ENCODE measurements at regions of chr16 and their contacts with region 1.

Region 1: GRCh38 chr16:3264137-3265036 is 8.0 kb upstream of the MEFV start:
- DNase-seq: peak; percentile 98
- H3K4me3 Mint-ChIP-seq: peak overlapping the region; percentile 89
- H3K27ac Mint-ChIP-seq: peak overlapping the region; percentile 95
- H3K4me1 Mint-ChIP-seq: no peaks in the 10 kb centered on the region
- H3K27me3 Mint-ChIP-seq: no peaks in the 10 kb centered on the region
- CTCF ChIP-seq: peak; percentile 43

Region 2: GRCh38 chr16:3150346-3151218 is 113.8 kb before region 1 on chr16:
- CTCF ChIA-PET with region 1: no interaction called
- POLR2A ChIA-PET with region 1: interaction called, 5 read pairs
- intact Hi-C with region 1: loop called (anchors 1 kb)
- DNase-seq: peak; percentile 98
- H3K4me3 Mint-ChIP-seq: peak overlapping the region; percentile 83
- H3K27ac Mint-ChIP-seq: peak overlapping the region; percentile 87
- H3K4me1 Mint-ChIP-seq: peaks cover 10% of the 10 kb centered on the region
- H3K27me3 Mint-ChIP-seq: no peaks in the 10 kb centered on the region
- CTCF ChIP-seq: no peak

Region 3: DNA sequence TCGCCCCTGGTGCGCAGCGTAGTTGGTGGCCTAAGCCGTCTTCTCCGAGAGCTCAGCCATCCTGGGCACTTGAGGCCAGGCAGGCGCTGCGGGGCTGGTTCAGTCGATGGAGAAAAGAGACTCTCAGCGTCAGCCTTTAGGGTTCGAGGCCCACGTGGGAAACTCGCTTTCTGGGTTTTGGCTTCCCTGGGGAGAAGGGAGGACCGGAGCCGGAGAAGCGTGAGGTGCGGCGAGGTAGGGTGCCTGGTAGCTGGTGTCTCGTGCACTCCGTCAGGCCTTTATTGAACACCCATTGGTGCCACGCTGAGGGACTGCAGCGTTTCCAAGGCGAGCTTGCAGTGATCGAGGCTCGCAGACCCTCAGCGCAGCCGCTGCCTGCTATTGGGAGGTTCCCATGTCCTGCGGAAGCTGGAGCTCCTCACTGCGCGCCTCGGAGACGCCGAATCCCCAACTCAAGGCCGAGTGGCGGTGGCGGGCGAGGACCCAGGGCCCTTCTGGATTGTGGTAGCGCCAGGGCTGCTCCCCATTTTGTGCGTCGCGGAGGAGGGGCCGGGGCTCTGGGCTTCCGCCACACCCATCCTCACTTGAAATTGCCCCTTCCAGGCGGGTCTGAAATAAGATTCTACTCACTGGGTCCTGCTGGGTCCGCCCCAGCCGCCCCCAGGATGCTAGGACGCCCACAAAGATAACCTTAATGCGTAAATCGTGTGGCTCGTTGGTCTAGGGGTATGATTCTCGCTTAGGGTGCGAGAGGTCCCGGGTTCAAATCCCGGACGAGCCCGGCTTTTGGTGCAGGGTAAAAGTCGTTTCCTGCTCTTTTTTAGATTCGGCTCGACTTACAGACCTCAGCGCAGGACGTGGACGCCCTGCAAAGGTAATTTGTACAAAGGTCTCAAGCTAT is 75.2 kb before region 1 on chr16:
- CTCF ChIA-PET with region 1: no interaction called
- POLR2A ChIA-PET with region 1: interaction called, 6 read pairs
- intact Hi-C with region 1: loop called (anchors 2 kb)
- DNase-seq: peak; percentile 72
- H3K4me3 Mint-ChIP-seq: peak overlapping the region; percentile 78
- H3K27ac Mint-ChIP-seq: peak overlapping the region; percentile 50
- H3K4me1 Mint-ChIP-seq: peaks cover 5% of the 10 kb centered on the region
- H3K27me3 Mint-ChIP-seq: no peaks in the 10 kb centered on the region
- CTCF ChIP-seq: no peak

Region 4: DNA sequence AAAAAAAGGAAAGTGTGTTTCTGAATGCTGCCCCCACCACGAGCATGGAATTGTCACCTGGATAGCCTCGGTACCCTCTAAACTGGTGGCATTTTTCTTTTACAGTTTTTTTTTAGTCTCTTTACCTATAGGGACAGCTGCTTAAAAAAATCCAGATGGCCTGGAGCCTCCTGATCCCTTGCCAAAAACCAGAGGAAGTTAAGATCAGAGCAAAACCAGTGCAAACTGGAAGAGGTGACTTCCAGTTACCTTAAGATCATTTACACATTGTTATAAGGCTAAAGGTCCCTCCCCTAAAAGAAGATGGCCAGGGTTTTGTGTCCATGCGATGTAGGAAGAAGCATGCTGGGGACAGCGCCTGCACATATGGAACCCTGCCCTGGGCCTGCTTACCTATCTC is 11.4 kb before region 1 on chr16:
- CTCF ChIA-PET with region 1: interaction called, 3 read pairs
- POLR2A ChIA-PET with region 1: interaction called, 17 read pairs
- intact Hi-C with region 1: no loop called
- DNase-seq: peak; percentile 48
- H3K4me3 Mint-ChIP-seq: no peak overlapping the region
- H3K27ac Mint-ChIP-seq: no peak overlapping the region
- H3K4me1 Mint-ChIP-seq: no peaks in the 10 kb centered on the region
- H3K27me3 Mint-ChIP-seq: no peaks in the 10 kb centered on the region
- CTCF ChIP-seq: no peak

Region 5: DNA sequence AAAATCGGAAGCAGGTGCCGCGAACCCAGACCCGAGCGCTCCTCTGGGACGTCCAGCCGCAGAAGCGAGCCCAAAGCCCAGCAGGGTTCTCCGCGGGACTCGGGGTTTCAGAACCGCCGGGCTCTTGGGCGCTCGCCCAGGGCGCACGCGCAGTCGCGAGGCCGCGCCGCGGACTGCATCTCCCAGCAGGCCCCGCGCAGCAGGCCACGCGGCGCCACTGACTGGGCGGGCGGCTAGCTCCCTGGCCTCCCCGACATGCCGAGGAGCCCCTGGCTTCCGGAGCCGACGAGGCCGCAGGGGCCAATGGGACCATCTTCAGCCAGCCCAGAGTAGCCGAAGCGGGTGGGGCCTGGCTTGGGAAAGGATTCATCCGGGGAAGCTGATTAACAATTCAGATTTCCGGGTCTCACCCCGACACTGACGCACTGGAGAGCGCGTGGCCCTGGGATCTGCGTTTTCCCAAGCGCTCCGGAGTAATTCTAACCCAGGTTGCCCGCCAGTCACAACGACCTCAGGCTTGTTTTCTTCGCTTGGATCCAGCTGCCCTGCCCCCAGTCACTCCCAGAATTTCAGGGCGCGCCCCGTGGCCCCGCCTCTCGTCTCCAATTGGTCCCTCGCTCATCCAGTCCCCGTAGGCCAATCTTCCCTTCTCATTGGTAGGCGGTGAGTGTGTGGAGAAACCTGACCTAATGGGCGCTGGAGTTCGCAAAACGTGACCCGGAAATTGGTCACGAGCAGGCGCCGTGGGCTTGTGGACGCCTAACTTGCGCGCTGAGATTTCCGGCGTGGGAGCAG is 18.5 kb after region 1 on chr16 and contains the start of gene ZNF263:
- CTCF ChIA-PET with region 1: interaction called, 10 read pairs
- POLR2A ChIA-PET with region 1: interaction called, 161 read pairs
- intact Hi-C with region 1: loop called (anchors 1 kb)
- DNase-seq: peak; percentile 99
- H3K4me3 Mint-ChIP-seq: peak within 1 kb of the TSS; percentile 96
- H3K27ac Mint-ChIP-seq: peak within 1 kb of the TSS; percentile 99
- H3K4me1 Mint-ChIP-seq: no peaks in the 10 kb centered on the region
- H3K27me3 Mint-ChIP-seq: no peaks in the 10 kb centered on the region
- CTCF ChIP-seq: no peak
- total RNA-seq, gene ZNF263: 28.3 and 30.9 TPM in 2 replicates

Region 6: GRCh38 chr16:3364774-3365427 is 100.5 kb after region 1 on chr16:
- CTCF ChIA-PET with region 1: no interaction called
- POLR2A ChIA-PET with region 1: no interaction called
- intact Hi-C with region 1: no loop called
- DNase-seq: no peak
- H3K4me3 Mint-ChIP-seq: no peak overlapping the region
- H3K27ac Mint-ChIP-seq: no peak overlapping the region
- H3K4me1 Mint-ChIP-seq: no peaks in the 10 kb centered on the region
- H3K27me3 Mint-ChIP-seq: peaks cover 12% of the 10 kb centered on the region
- CTCF ChIP-seq: no peak

Region 7: GRCh38 chr16:3443108-3444031 is 179.0 kb after region 1 on chr16 and contains the starts of genes NAA60 and ZNF597:
- CTCF ChIA-PET with region 1: no interaction called
- POLR2A ChIA-PET with region 1: interaction called, 25 read pairs
- intact Hi-C with region 1: no loop called
- DNase-seq: peak; percentile 93
- H3K4me3 Mint-ChIP-seq: peak within 1 kb of the TSS; percentile 87
- H3K27ac Mint-ChIP-seq: peak within 1 kb of the TSS; percentile 96
- H3K4me1 Mint-ChIP-seq: no peaks in the 10 kb centered on the region
- H3K27me3 Mint-ChIP-seq: no peaks in the 10 kb centered on the region
- CTCF ChIP-seq: no peak
- total RNA-seq, gene NAA60: 38.6 and 40.8 TPM in 2 replicates
- total RNA-seq, gene ZNF597: 2.3 and 2.5 TPM in 2 replicates

Region 8: DNA sequence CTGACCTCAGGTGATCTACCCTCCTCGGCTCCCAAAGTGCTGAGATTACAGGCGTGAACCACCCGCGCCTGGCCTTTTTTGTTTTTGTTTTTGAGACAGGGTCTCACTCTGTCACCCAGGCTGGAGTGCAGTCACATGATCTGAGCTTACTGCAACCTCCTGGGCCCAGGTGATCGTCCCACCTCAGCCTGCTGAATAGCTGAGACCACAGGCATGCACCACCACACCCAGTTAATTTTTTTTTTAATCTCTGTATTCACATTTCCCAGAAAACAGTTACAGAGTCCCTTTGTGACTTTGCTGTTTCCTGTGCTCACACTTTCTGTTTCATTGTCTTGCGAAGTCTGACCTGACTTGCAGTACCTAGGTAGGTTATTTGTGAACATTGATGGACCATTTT is 239.1 kb after region 1 on chr16:
- CTCF ChIA-PET with region 1: interaction called, 3 read pairs
- POLR2A ChIA-PET with region 1: interaction called, 4 read pairs
- intact Hi-C with region 1: loop called (anchors 1 kb)
- DNase-seq: no peak
- H3K4me3 Mint-ChIP-seq: no peak overlapping the region
- H3K27ac Mint-ChIP-seq: no peak overlapping the region
- H3K4me1 Mint-ChIP-seq: peaks cover 4% of the 10 kb centered on the region
- H3K27me3 Mint-ChIP-seq: no peaks in the 10 kb centered on the region
- CTCF ChIP-seq: no peak

Region 9: GRCh38 chr16:3729161-3730112 is 465.1 kb after region 1 on chr16:
- CTCF ChIA-PET with region 1: no interaction called
- POLR2A ChIA-PET with region 1: no interaction called
- intact Hi-C with region 1: no loop called
- DNase-seq: no peak
- H3K4me3 Mint-ChIP-seq: no peak overlapping the region
- H3K27ac Mint-ChIP-seq: no peak overlapping the region
- H3K4me1 Mint-ChIP-seq: no peaks in the 10 kb centered on the region
- H3K27me3 Mint-ChIP-seq: no peaks in the 10 kb centered on the region
- CTCF ChIP-seq: no peak

Measured in MCF 10A (cell line).